ENCODE measurements at regions of chr16 and their contacts with region 1.

Region 1: DNA sequence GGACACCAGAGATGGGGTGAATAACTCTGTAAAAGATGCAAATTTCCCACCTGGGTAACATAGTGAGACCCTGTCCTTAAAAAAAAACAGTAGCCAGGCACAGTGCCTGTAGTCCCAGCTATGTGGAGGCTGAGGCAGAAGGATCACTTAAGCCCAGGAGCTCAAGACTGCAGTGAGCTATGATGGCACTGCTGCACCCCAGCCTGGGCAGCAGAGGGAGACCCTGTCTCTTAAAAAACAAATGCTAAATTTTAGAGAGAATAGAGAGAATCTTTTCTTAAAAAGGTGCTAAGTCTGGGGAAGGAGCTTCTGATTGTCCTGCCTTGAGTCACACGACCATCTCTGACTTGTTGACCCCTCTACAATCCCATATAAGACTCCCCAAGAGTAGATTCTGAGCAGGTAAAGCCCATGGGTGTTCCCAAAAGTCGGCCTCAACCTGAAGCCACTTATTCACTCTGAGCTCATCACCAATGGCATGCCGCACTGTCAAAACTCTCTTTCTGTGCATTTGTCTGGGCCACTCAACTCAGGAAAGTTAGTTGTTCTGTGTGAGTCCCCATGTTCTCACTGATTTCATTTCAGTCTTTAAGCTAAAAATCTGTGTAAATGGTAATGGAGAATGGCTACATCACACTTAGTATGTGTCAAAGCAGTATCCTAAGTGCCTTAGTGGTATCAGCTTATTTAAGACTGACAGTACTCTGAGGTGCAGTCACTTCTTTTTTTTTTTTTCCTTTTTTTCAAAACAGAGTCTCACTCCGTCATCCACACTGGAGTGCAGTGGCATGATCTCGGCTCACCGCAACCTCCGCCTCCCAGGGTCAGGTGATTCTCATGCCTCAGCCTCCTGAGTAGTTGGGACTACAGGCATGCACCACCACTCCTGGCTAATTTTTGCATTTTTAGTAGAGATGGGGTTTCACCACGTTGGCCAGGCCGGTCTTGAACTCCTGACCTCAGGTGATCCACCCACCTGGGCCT is 41.6 kb downstream of the PRKCB start:
- DNase-seq: no peak
- H3K4me3 Mint-ChIP-seq: no peak overlapping the region
- H3K27ac Mint-ChIP-seq: no peak overlapping the region
- H3K4me1 Mint-ChIP-seq: peaks cover 72% of the 10 kb centered on the region
- H3K27me3 Mint-ChIP-seq: no peaks in the 10 kb centered on the region

Region 2: DNA sequence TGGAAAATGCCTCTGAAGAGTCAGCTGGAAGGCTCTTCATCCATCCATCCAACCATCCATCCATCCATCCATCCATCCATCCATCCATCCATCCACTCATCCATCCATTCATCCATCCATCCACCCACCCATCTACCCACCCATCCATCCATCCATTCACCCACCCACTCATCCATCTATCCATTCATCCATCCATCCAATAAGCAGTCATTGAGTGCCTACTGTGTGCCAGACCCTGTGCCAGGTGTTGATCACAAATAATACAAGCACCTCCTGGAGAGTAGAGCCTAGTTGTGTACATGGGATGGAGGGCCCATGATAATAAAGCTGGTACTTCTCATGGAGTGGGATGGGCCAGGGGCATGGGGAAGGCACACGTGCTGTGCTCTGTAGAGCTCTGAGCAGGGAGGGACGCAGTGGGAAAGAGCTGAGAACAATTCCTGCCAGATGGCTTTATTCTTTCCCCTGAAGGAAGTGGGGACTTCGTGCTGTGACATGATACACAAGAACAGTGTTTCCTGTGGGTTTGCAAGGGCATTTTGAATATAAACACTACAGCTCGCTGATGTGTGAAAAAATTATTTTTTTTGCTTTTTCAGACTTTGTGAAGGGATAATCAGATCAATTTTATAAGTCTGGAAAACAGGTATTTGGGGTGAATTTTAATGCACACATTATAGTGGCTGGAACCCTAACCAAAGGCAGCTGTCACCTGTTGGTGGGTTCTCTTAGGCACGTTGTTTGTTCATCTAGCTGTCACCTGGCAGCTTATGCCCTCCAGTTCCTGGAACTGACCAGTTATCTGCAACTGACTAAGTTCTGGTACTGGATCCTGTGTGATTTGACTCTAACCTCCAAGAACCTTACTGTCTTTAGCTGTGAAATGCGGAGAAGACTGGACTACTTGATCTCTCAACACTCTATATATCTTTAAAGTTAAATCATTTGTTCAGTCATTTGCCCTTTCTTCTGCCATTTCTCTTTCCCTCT is 19.7 kb after region 1 on chr16:
- CTCF ChIA-PET with region 1: interaction called, 11 read pairs
- POLR2A ChIA-PET with region 1: no interaction called
- DNase-seq: peak; percentile 17
- H3K4me3 Mint-ChIP-seq: no peak overlapping the region
- H3K27ac Mint-ChIP-seq: peak overlapping the region; percentile 80
- H3K4me1 Mint-ChIP-seq: peaks cover 43% of the 10 kb centered on the region
- H3K27me3 Mint-ChIP-seq: no peaks in the 10 kb centered on the region